ENCODE measurements at regions of chr20 and their contacts with region 1.

Region 1: GRCh38 chr20:33731693-33732165 is at the start of gene ZNF341:
- DNase-seq: peak; percentile 94
- ATAC-seq: peak; percentile 90
- H3K4me3 Mint-ChIP-seq: peak within 1 kb of the TSS; percentile 75
- H3K27ac Mint-ChIP-seq: peak within 1 kb of the TSS; percentile 86
- H3K4me1 Mint-ChIP-seq: peaks cover 21% of the 10 kb centered on the region
- H3K27me3 Mint-ChIP-seq: no peaks in the 10 kb centered on the region
- total RNA-seq, gene ZNF341: 4.3 to 6.1 TPM

Region 2: GRCh38 chr20:32819992-32820710 is 911.6 kb before region 1 on chr20:
- CTCF ChIA-PET with region 1: no interaction called
- POLR2A ChIA-PET with region 1: no interaction called
- intact Hi-C with region 1: loop called in 1 of 2 experiments (anchors 5 kb)
- DNase-seq: peak; percentile 85
- ATAC-seq: peak; percentile 76
- H3K4me3 Mint-ChIP-seq: peak overlapping the region; percentile 87
- H3K27ac Mint-ChIP-seq: peak overlapping the region; percentile 92
- H3K4me1 Mint-ChIP-seq: peaks cover 37% of the 10 kb centered on the region
- H3K27me3 Mint-ChIP-seq: no peaks in the 10 kb centered on the region

Region 3: DNA sequence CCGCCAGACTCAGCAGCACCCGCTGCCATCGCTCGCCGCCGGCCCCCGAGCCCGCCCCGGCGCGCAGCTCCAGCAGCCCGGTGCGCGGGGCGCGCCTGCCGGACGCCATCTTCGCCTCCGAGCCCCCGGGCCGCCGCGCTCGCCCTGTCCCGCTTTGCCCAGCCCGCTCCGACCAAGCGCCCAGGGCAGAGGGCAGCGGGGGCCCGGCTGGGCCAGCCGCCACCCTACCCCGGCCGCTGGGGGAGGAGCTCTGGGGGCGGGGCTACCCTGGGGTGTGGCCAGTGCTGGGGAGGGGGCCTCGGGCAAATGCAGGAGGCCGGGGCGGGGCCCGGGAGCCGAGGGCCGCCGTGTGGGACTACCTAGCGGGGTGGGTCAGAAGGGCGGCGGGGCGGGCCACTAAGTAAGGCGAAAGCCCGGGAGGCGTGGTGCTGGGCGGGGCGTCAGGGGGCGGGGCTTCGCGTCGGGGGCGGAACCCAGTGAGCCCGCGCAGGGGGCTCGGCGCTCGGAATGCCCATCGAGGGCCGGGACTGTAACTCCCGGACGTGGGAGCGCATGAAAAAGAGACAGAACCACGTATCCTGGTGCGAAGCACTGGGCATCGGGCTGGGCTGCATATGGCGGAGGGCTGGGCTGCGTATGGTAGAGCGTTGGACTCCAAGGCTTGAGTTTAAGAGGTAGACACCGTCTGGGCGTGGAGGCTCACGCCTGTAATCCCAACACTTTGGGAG is 288.1 kb before region 1 on chr20 and contains the start of gene SNTA1:
- CTCF ChIA-PET with region 1: no interaction called
- POLR2A ChIA-PET with region 1: no interaction called
- intact Hi-C with region 1: loop called (anchors 1 to 5 kb)
- DNase-seq: peak; percentile 95
- ATAC-seq: peak; percentile 92
- H3K4me3 Mint-ChIP-seq: peak within 1 kb of the TSS; percentile 83
- H3K27ac Mint-ChIP-seq: peak within 1 kb of the TSS; percentile 78
- H3K4me1 Mint-ChIP-seq: peaks cover 15% of the 10 kb centered on the region
- H3K27me3 Mint-ChIP-seq: no peaks in the 10 kb centered on the region
- total RNA-seq, gene SNTA1: 4.2 to 5.0 TPM

Region 4: DNA sequence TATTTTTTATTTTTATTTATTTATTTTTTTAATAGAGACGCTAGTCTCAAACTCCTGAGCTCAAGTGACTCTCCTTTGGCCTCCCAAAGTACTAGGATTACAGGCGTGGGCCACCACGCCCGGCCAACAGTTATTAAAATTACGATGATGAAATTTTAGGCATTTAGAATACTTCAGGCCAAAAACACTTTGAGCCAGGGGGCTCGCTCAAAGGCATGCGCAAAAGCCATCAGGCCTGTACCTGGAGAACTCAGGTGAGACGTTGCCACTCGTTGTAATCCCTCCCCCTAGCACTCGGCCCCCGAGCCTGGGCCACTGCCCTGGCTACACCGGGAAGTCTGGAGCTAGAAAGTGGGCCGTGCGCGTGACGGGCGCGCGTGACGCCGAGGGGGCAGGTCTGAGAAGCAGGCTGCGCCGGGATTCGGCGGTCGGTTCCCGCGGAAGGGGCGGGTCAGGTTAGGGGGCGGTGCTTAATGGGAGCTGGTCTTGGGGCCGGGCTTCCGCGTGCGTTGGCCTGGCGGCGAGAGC is 242.2 kb before region 1 on chr20:
- CTCF ChIA-PET with region 1: interaction called, 3 read pairs
- POLR2A ChIA-PET with region 1: no interaction called
- intact Hi-C with region 1: loop called in 1 of 2 experiments (anchors 1 kb)
- DNase-seq: peak; percentile 99
- ATAC-seq: peak; percentile 98
- H3K4me3 Mint-ChIP-seq: peak overlapping the region; percentile 85
- H3K27ac Mint-ChIP-seq: peak overlapping the region; percentile 78
- H3K4me1 Mint-ChIP-seq: peaks cover 6% of the 10 kb centered on the region
- H3K27me3 Mint-ChIP-seq: no peaks in the 10 kb centered on the region

Region 5: GRCh38 chr20:33666293-33667244 is 65.2 kb before region 1 on chr20 and contains the start of gene ACTL10:
- CTCF ChIA-PET with region 1: interaction called, 3 read pairs
- POLR2A ChIA-PET with region 1: no interaction called
- intact Hi-C with region 1: loop called (anchors 1 to 5 kb)
- DNase-seq: peak; percentile 89
- ATAC-seq: peak; percentile 59
- H3K4me3 Mint-ChIP-seq: peak within 1 kb of the TSS; percentile 75
- H3K27ac Mint-ChIP-seq: peak within 1 kb of the TSS; percentile 90
- H3K4me1 Mint-ChIP-seq: peaks cover 31% of the 10 kb centered on the region
- H3K27me3 Mint-ChIP-seq: no peaks in the 10 kb centered on the region
- total RNA-seq, gene ACTL10: 0.91 to 1.7 TPM

Region 6: DNA sequence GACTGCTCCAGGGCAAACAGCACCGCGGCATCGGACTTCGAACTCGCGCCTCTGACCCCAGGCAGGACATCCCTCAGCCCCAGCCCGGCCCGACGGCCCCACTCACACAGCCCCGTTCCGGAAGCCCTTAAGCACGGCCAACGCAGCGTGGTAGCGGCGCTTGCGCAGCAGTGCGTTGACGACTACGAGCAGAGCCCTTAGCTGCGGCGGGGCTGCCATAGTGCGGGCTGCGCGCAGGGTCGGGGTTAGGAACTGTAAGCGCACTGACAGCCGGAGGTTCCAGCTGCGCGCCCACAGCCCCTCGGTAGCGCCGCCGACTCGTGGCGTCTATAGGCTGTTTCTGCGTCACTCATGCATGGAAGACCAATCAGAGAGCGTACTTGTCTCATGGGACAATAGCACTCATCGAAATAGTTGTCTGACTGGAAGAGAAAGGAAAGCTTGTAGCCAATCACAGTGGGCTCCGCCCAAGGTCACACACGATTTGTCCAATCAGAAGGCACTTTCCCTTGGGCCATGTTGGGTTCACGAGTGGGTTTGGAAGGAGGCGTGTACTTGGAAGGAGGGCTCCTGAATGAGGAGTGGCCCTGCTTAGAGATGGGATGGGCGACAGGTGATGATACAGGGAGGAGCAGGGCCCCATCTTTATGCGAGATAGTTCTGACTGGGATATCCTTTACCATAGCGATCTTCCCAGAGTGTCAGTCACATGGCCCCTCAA is 11.6 kb before region 1 on chr20 and contains the start of gene PXMP4:
- CTCF ChIA-PET with region 1: interaction called, 8 read pairs
- POLR2A ChIA-PET with region 1: interaction called, 13 read pairs
- intact Hi-C with region 1: loop called (anchors 1 kb)
- DNase-seq: peak; percentile 92
- ATAC-seq: peak; percentile 99
- H3K4me3 Mint-ChIP-seq: peak within 1 kb of the TSS; percentile 88
- H3K27ac Mint-ChIP-seq: peak within 1 kb of the TSS; percentile 83
- H3K4me1 Mint-ChIP-seq: peaks cover 18% of the 10 kb centered on the region
- H3K27me3 Mint-ChIP-seq: no peaks in the 10 kb centered on the region
- total RNA-seq, gene PXMP4: 8.8 to 10.2 TPM

Region 7: GRCh38 chr20:34111702-34112599 is 380.2 kb after region 1 on chr20 and contains the start of gene EIF2S2:
- CTCF ChIA-PET with region 1: no interaction called
- POLR2A ChIA-PET with region 1: no interaction called
- intact Hi-C with region 1: loop called in 1 of 2 experiments (anchors 2 kb)
- DNase-seq: peak; percentile 97
- ATAC-seq: peak; percentile 88
- H3K4me3 Mint-ChIP-seq: peak within 1 kb of the TSS; percentile 86
- H3K27ac Mint-ChIP-seq: peak within 1 kb of the TSS; percentile 97
- H3K4me1 Mint-ChIP-seq: peaks cover 38% of the 10 kb centered on the region
- H3K27me3 Mint-ChIP-seq: no peaks in the 10 kb centered on the region
- total RNA-seq, gene EIF2S2: 179 to 187 TPM